Activated B cell treated with CpG ODN at 0.5 μM for 24 hours (primary cell): ENCODE measurements at regions of chr14 and their contacts with region 1.

Region 1: GRCh38 chr14:21014761-21015190 is 10.1 kb downstream of the NDRG2 start:
- DNase-seq: peak; percentile 52
- ATAC-seq: peak; percentile 64
- H3K4me3 Mint-ChIP-seq: no peak overlapping the region
- H3K27ac Mint-ChIP-seq: no peak overlapping the region
- H3K4me1 Mint-ChIP-seq: no peaks in the 10 kb centered on the region
- H3K27me3 Mint-ChIP-seq: peaks cover 37% of the 10 kb centered on the region
- CTCF ChIP-seq: peak; percentile 48

Region 2: GRCh38 chr14:21003788-21004346 is 10.9 kb before region 1 on chr14:
- CTCF ChIA-PET with region 1: interaction called, 18 read pairs
- POLR2A ChIA-PET with region 1: no interaction called
- intact Hi-C with region 1: no loop called
- DNase-seq: no peak
- ATAC-seq: no peak
- H3K4me3 Mint-ChIP-seq: no peak overlapping the region
- H3K27ac Mint-ChIP-seq: no peak overlapping the region
- H3K4me1 Mint-ChIP-seq: no peaks in the 10 kb centered on the region
- H3K27me3 Mint-ChIP-seq: no peaks in the 10 kb centered on the region
- CTCF ChIP-seq: no peak

Region 3: GRCh38 chr14:21024585-21025370 is 10.0 kb after region 1 on chr14 and contains the start of gene NDRG2:
- CTCF ChIA-PET with region 1: interaction called, 12 read pairs
- POLR2A ChIA-PET with region 1: no interaction called
- intact Hi-C with region 1: loop called (anchors 1 kb)
- DNase-seq: peak; percentile 64
- ATAC-seq: peak; percentile 92
- H3K4me3 Mint-ChIP-seq: peak within 1 kb of the TSS; percentile 88
- H3K27ac Mint-ChIP-seq: peak within 1 kb of the TSS; percentile 8
- H3K4me1 Mint-ChIP-seq: peaks cover 18% of the 10 kb centered on the region
- H3K27me3 Mint-ChIP-seq: peaks cover 25% of the 10 kb centered on the region
- CTCF ChIP-seq: no peak
- total RNA-seq, gene NDRG2: 2.1 and 3.9 TPM in 2 replicates

Region 4: GRCh38 chr14:21032326-21033132 is 17.8 kb after region 1 on chr14:
- CTCF ChIA-PET with region 1: interaction called, 21 read pairs
- POLR2A ChIA-PET with region 1: interaction called, 4 read pairs
- intact Hi-C with region 1: no loop called
- DNase-seq: no peak
- ATAC-seq: no peak
- H3K4me3 Mint-ChIP-seq: no peak overlapping the region
- H3K27ac Mint-ChIP-seq: no peak overlapping the region
- H3K4me1 Mint-ChIP-seq: no peaks in the 10 kb centered on the region
- H3K27me3 Mint-ChIP-seq: peaks cover 10% of the 10 kb centered on the region
- CTCF ChIP-seq: no peak

Region 5: DNA sequence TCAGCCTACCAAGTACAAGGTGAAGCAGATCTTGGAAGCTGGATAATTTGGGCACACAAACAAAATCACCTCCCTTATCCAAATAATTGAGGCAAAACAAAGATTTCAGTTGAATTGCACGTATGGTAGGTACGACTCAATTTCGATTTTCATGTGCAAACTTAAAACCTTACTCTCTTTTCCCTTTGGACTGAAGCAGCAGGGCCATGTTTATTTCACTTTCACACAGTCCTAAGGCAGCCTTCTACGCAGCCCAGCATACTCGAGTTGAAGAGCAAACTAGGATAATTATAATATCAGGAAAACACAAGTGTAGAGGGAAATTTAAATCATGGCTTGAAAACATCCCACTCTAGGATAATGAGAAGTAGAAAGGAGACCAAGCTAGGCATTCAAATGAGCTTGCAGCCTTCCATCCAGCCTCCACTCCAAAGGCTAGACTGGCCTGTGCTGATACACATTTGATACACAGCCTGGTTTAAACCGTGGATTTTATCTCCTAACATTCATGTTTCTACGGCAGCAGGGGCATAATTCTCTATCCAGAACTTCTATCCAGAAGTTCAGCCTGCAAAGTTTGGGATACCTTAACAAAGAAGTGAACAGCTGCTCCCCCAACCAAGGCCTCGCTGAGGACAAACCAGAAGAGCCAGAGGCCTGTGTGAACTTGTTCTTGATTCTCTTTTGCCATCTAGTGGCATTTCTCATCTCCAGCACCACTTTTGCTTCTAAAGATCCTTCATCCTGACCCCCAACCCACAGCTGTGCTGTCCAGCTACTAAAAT is 25.0 kb after region 1 on chr14:
- CTCF ChIA-PET with region 1: interaction called, 92 read pairs
- POLR2A ChIA-PET with region 1: interaction called, 3 read pairs
- intact Hi-C with region 1: loop called (anchors 1 kb)
- DNase-seq: no peak
- ATAC-seq: peak; percentile 62
- H3K4me3 Mint-ChIP-seq: no peak overlapping the region
- H3K27ac Mint-ChIP-seq: no peak overlapping the region
- H3K4me1 Mint-ChIP-seq: no peaks in the 10 kb centered on the region
- H3K27me3 Mint-ChIP-seq: peaks cover 19% of the 10 kb centered on the region
- CTCF ChIP-seq: no peak

Region 6: DNA sequence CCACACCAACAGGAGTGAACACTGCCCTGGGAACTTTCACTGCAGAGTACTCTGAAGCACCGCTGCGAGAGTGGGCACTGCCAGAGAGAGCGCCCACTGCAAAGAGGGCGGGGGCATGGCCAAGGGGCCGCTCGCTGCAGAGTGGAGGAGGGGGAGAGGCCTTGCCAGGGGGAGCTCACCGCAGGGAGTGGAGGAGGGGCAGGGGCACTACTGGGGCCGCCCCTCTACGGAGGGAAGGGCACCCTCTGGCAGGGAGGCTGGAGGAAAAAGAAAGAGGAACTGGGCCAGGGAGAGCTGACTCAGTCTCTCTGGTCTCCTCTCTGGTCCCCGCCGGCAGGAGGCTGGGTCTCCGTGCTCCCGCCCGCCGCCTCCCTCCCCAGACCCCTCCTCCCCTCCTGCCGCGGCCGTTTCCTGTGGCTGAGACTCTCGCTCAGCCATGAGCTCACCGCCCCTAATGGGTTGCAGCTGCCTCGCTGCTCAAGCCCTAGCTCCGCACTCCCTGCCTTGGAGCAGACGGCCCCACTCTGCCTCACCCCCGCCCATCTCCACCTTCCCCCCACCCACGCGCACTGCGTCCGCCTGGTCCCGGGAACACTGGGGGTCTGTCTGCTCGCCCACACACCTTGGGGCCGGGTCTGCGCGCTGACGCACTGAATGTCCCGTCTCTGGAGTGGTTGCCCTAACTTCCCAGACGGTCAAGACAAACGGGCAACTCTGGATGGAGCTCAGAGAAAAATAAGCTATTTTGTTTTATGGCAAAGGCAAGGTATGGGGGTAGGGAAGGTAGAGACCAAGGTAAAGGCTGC is 56.7 kb after region 1 on chr14:
- CTCF ChIA-PET with region 1: interaction called, 23 read pairs
- POLR2A ChIA-PET with region 1: interaction called, 7 read pairs
- intact Hi-C with region 1: loop called (anchors 1 kb)
- DNase-seq: peak; percentile 63
- ATAC-seq: peak; percentile 72
- H3K4me3 Mint-ChIP-seq: peak overlapping the region; percentile 83
- H3K27ac Mint-ChIP-seq: peak overlapping the region; percentile 41
- H3K4me1 Mint-ChIP-seq: peaks cover 42% of the 10 kb centered on the region
- H3K27me3 Mint-ChIP-seq: peaks cover 11% of the 10 kb centered on the region
- CTCF ChIP-seq: no peak

Region 7: DNA sequence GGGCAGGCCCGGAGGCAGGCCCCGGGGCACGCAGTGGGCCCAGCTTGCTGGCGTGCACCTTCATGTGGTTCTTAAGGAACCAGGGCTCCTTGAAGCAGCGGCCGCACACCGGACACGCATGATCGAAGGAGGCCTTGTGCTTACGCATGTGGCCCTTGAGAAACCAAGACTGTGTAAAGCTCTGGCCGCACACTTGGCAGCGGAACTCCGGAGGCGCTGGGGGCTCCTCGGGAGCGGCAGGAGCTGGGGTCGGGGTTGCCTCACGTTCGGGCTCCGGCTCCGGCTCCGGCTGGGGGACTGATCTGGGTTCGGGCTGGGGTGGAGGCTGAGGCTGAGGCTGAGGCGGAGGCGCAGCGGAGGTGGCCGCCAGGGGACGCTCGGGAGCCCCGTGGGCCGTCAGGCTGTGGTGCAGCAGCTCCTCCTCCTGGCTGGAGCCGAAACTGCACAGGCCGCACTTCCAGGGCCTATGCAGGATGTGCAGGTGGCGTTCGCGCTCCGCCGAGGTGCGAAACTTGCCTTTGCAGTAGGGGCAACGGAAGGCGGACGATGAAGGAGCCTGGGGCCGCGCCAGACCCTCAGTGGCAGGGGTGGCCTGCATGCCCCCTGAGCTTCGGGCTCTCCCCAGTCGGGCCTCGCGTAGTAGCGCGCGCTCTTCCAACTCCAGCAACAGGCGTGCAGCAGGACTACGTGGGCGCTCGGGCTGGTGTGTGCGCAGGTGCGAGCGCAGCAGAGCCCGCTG is 77.7 kb after region 1 on chr14:
- CTCF ChIA-PET with region 1: interaction called, 142 read pairs
- POLR2A ChIA-PET with region 1: interaction called, 5 read pairs
- intact Hi-C with region 1: loop called (anchors 1 kb)
- DNase-seq: peak; percentile 94
- ATAC-seq: peak; percentile 99
- H3K4me3 Mint-ChIP-seq: no peak overlapping the region
- H3K27ac Mint-ChIP-seq: no peak overlapping the region
- H3K4me1 Mint-ChIP-seq: peaks cover 18% of the 10 kb centered on the region
- H3K27me3 Mint-ChIP-seq: no peaks in the 10 kb centered on the region
- CTCF ChIP-seq: peak; percentile 98